Left ventricle myocardium inferior (tissue), 1 donor: ENCODE measurements at regions of chr5 and their contacts with region 1.

Region 1: DNA sequence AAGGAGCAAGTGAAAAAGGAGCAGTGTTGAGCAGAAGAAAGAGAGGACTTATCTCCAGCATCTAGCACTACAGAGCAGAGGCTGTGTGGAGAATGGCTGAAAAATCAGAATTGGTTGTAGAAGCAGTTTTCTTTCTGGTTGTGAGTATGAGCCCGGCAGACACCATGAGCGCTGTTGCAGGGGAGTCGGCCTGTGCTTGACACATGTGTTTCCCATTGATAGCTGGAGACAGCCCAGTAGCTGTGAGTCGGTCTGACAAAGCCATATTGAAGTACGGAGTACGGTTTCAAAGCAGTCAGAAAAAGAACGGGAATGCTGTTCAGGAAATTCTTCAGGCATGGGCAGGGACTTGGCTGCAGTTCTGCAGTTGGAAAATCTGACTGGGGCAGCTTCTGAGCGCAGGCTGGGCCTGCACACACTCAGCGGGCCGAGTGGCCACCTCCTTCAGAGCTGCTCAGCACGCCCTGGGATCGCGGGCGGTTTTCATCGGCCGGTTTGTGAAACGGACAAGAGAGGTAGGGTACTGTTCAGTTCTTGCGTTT is at the start of gene SGCD:
- DNase-seq: peak; percentile 71
- H3K4me3 ChIP-seq: peak within 1 kb of the TSS; percentile 72
- H3K27ac ChIP-seq: peak within 1 kb of the TSS; percentile 92
- H3K4me1 ChIP-seq: peaks cover 46% of the 10 kb centered on the region
- H3K27me3 ChIP-seq: no peaks in the 10 kb centered on the region
- CTCF ChIP-seq: peak; percentile 13
- total RNA-seq, gene SGCD: 98.7 TPM

Region 2: GRCh38 chr5:156128026-156128425 is 198.8 kb before region 1 on chr5:
- intact Hi-C with region 1: no loop called
- DNase-seq: no peak
- H3K4me3 ChIP-seq: no peak overlapping the region
- H3K27ac ChIP-seq: no peak overlapping the region
- H3K4me1 ChIP-seq: peaks cover 7% of the 10 kb centered on the region
- H3K27me3 ChIP-seq: no peaks in the 10 kb centered on the region
- CTCF ChIP-seq: no peak

Region 3: GRCh38 chr5:156241266-156241665 is 85.5 kb before region 1 on chr5:
- intact Hi-C with region 1: no loop called
- DNase-seq: no peak
- H3K4me3 ChIP-seq: no peak overlapping the region
- H3K27ac ChIP-seq: no peak overlapping the region
- H3K4me1 ChIP-seq: peaks cover 25% of the 10 kb centered on the region
- H3K27me3 ChIP-seq: no peaks in the 10 kb centered on the region
- CTCF ChIP-seq: no peak

Region 4: GRCh38 chr5:156824800-156825199 is 498.0 kb after region 1 on chr5:
- intact Hi-C with region 1: loop called (anchors 5 kb)
- DNase-seq: no peak
- H3K4me3 ChIP-seq: no peak overlapping the region
- H3K27ac ChIP-seq: no peak overlapping the region
- H3K4me1 ChIP-seq: no peaks in the 10 kb centered on the region
- H3K27me3 ChIP-seq: no peaks in the 10 kb centered on the region
- CTCF ChIP-seq: peak; percentile 61